Cardiac septum (tissue), 1 donor: ENCODE measurements at regions of chr17 and their contacts with region 1.

Region 1: DNA sequence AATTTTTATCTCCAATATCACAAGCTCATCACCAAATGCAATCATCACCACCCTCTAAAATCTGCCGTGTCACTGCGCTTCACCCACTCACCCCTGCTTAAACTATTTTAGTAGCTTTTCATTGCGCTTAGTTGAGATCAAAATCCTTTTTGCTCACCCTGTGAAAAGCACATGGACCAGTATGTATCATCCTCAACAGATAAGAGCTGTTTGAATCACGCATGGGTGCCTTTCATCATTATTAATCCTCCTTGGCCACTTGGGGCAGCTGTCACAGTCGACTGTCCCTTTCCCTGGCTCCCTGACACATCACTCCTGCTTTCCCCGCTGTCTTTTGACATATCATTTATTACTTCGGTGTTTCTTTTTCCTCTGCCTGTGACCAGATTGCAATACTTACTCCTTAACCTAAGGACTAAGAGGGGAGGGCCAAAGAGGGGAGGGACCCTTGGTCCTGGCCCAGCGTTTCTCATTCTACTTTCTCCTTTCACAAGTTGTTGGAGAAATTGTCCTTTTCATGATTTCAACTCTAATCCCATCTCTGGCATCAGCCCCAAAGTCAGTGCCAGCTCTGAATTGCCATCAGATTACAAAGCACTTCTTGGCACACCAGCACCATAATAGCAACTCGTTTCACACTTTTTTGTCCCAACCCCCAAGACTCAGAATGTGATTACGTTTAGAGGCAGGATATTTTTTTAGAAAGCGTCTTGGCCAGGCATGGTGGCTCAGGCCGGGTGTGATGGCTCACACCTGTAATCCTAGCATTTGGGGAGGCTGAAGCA is 8.6 kb upstream of the KDM6B start:
- DNase-seq: no peak

Region 2: GRCh38 chr17:7851438-7852256 is 26.2 kb after region 1 on chr17:
- intact Hi-C with region 1: loop called (anchors 2 kb)
- DNase-seq: peak; percentile 95

Region 3: GRCh38 chr17:8001976-8002720 is 176.8 kb after region 1 on chr17 and contains the start of gene GUCY2D:
- intact Hi-C with region 1: no loop called
- DNase-seq: no peak
- total RNA-seq, gene GUCY2D: not detected